ENCODE measurements at regions of chr15 and their contacts with region 1.

Region 1: GRCh38 chr15:80455668-80456442 is 51.7 kb downstream of the ARNT2 start:
- DNase-seq: peak in 2 of 3 donors; percentile 40 to 69
- ATAC-seq: peak; percentile 51 to 70
- H3K4me3 ChIP-seq: no peak overlapping the region
- H3K27ac ChIP-seq: no peak overlapping the region
- H3K4me1 ChIP-seq: no peaks in the 10 kb centered on the region
- H3K27me3 ChIP-seq: no peaks in the 10 kb centered on the region

Region 2: DNA sequence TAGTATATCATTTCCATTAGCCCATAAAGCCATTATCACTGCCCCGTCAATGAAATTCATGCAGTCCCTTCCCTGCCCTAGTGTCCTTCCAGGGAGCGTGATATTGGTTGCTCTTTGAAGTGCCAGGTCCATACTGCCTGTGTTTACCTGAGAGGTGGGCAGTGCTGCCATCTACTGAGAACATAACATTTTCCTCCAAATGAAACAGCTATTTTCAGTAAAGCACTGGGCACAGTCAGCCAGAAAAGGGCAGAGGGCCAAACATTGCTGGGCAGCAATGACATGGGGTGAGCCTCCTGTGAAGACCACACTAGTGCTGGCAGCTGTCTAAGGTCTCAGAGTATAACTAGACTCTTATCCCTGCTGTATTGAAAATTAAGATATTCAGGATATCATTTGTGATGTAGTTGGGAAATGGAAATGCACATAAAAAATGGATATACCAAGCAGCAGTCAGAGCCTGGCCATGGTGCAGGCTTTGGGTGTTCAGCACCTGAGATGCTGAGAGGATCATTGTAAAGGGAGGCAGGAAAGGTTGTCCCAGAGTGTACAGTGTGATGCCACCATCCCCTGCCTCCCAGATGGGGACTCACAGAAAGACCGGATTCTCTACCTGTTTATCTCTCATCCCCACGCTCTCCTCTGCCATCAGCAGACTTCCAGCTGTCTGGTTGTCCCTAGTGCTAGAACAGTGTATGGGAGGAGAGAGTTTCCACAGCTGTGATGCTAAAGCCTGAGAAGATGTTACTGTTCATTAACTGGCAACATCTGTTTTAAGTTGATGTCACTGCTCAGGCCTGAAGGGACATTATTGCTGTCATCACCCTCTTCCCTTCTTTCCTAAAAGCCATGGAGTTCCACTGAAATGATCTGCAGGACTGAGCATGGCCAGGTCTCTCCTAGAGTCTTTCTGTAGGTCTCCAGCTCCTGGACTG is 57.1 kb after region 1 on chr15:
- intact Hi-C with region 1: no loop called
- DNase-seq: no peak
- ATAC-seq: peak in 1 of 2 donors; percentile 50
- H3K4me3 ChIP-seq: no peak overlapping the region
- H3K27ac ChIP-seq: no peak overlapping the region
- H3K4me1 ChIP-seq: peaks cover 2% of the 10 kb centered on the region
- H3K27me3 ChIP-seq: no peaks in the 10 kb centered on the region

Region 3: GRCh38 chr15:80550219-80550907 is 94.5 kb after region 1 on chr15:
- intact Hi-C with region 1: no loop called
- DNase-seq: no peak
- ATAC-seq: no peak
- H3K4me3 ChIP-seq: no peak overlapping the region
- H3K27ac ChIP-seq: no peak overlapping the region
- H3K4me1 ChIP-seq: no peaks in the 10 kb centered on the region
- H3K27me3 ChIP-seq: no peaks in the 10 kb centered on the region

Region 4: GRCh38 chr15:80970018-80970658 is 514.3 kb after region 1 on chr15:
- intact Hi-C with region 1: loop called (anchors 5 to 10 kb)
- DNase-seq: peak; percentile 35 to 68 (median 63)
- ATAC-seq: peak; percentile 61 to 70
- H3K4me3 ChIP-seq: no peak overlapping the region
- H3K27ac ChIP-seq: no peak overlapping the region
- H3K4me1 ChIP-seq: no peaks in the 10 kb centered on the region
- H3K27me3 ChIP-seq: no peaks in the 10 kb centered on the region

Measured in right cardiac atrium (tissue), 5 donors.